Activated CD8-positive, alpha-beta T cell treated with anti-CD3 and anti-CD28 coated beads for 36 hours (primary cell): ENCODE measurements at regions of chr14 and their contacts with region 1.

Region 1: GRCh38 chr14:68926236-68926635 is 52.9 kb downstream of the ACTN1 start:
- DNase-seq: peak; percentile 61
- ATAC-seq: no peak
- H3K4me3 Mint-ChIP-seq: no peak overlapping the region
- H3K27ac Mint-ChIP-seq: peak overlapping the region; percentile 50
- H3K4me1 Mint-ChIP-seq: peaks cover 76% of the 10 kb centered on the region
- H3K27me3 Mint-ChIP-seq: no peaks in the 10 kb centered on the region
- CTCF ChIP-seq: peak; percentile 60

Region 2: DNA sequence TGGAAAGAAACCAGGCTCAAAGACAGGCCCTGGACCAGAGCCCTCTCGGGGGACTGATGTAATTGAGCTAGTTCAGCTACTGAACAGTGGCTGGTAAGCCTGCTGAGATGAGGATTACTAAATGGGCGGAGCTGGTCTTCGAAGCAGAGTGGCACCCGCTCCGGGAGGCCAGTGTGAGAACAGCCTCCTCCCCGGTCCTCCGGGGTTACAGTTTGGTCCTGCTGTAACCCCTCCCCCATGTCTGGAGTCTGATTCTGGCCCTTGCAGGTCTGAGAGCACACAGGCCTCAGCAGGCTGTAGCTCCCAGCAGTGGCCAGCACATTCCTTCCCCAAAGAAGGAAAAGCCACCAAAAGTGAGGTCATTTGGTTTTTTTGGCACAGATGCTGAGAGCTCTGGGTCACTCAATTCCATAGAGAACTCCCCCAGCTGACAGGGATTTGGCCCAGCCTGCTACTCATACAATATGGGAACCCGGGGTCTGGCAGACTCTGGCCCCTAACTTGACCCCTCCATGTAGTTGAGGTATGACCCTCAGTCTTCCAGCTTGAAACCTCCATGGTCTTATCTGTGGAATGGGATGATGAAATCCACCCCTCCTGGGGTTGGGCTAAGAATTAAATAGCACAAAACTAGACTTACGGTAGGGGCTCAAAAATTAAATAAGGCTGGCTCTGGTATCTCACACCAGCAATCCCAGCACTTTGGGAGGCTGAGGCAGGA is 13.8 kb after region 1 on chr14:
- CTCF ChIA-PET with region 1: interaction called, 38 read pairs
- POLR2A ChIA-PET with region 1: interaction called, 8 read pairs
- intact Hi-C with region 1: no loop called
- DNase-seq: peak; percentile 48
- ATAC-seq: peak; percentile 62
- H3K4me3 Mint-ChIP-seq: no peak overlapping the region
- H3K27ac Mint-ChIP-seq: peak overlapping the region; percentile 84
- H3K4me1 Mint-ChIP-seq: peaks cover 83% of the 10 kb centered on the region
- H3K27me3 Mint-ChIP-seq: no peaks in the 10 kb centered on the region
- CTCF ChIP-seq: no peak